Aorta (tissue), 5 donors: ENCODE measurements at regions of chr1 and their contacts with region 1.

Region 1: GRCh38 chr1:150176593-150176992 is 26.9 kb downstream of the PLEKHO1 start:
- DNase-seq: no peak
- ATAC-seq: no peak
- H3K4me3 ChIP-seq: no peak overlapping the region
- H3K27ac ChIP-seq: no peak overlapping the region
- H3K4me1 ChIP-seq: no peaks in the 10 kb centered on the region
- H3K27me3 ChIP-seq: no peaks in the 10 kb centered on the region

Region 2: DNA sequence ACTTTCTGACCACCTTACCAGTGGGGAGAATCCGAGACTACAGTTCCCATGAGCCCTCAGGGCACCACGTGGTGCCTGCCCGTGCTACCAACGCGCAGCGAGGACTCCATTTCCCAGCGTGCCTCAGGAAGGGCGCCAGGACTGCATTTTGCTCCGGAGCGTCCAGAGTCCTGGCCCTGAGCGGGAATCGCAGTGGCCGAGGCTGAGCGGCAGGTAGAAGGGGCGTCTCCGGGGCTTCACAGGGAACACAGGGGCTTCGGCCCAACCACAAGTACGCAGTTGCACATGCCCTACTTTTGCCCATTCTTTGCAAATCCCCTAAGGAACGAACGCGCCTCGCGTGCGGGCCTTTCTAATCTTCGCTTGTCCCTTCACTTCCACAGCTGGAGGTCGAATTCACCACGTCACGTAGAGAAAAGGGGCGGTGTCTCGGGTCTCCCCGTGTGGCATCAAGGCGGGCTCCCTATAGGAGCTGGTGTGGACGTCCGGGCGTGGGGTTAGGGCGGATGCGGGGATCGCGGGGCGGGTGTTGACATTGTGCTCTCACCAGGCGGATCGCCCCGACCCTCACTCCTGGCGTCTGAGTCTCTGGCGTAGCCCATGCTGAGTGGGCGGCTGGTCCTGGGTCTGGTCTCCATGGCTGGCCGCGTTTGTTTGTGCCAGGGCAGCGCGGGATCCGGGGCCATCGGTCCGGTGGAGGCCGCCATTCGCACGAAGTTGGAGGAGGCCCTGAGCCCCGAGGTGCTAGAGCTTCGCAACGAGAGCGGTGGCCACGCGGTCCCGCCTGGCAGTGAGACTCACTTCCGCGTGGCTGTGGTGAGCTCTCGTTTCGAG is 276.9 kb before region 1 on chr1 and contains the start of gene BOLA1:
- intact Hi-C with region 1: loop called in 1 of 2 experiments (anchors 5 kb)
- DNase-seq: peak; percentile 97 to 98
- ATAC-seq: peak; percentile 98
- H3K4me3 ChIP-seq: peak within 1 kb of the TSS; percentile 33 to 78
- H3K27ac ChIP-seq: peak within 1 kb of the TSS in 1 of 2 donors; percentile 77
- H3K4me1 ChIP-seq: no peaks in the 10 kb centered on the region
- H3K27me3 ChIP-seq: no peaks in the 10 kb centered on the region
- total RNA-seq, gene BOLA1: 8.7 to 14.0 TPM

Region 3: GRCh38 chr1:149986486-149987294 is 189.9 kb before region 1 on chr1:
- intact Hi-C with region 1: no loop called
- DNase-seq: no peak
- ATAC-seq: peak; percentile 59
- H3K4me3 ChIP-seq: no peak overlapping the region
- H3K27ac ChIP-seq: no peak overlapping the region
- H3K4me1 ChIP-seq: peaks cover 2 to 8% of the 10 kb centered on the region in 2 donors
- H3K27me3 ChIP-seq: no peaks in the 10 kb centered on the region